ENCODE measurements at regions of chr9 and their contacts with region 1.

Region 1: DNA sequence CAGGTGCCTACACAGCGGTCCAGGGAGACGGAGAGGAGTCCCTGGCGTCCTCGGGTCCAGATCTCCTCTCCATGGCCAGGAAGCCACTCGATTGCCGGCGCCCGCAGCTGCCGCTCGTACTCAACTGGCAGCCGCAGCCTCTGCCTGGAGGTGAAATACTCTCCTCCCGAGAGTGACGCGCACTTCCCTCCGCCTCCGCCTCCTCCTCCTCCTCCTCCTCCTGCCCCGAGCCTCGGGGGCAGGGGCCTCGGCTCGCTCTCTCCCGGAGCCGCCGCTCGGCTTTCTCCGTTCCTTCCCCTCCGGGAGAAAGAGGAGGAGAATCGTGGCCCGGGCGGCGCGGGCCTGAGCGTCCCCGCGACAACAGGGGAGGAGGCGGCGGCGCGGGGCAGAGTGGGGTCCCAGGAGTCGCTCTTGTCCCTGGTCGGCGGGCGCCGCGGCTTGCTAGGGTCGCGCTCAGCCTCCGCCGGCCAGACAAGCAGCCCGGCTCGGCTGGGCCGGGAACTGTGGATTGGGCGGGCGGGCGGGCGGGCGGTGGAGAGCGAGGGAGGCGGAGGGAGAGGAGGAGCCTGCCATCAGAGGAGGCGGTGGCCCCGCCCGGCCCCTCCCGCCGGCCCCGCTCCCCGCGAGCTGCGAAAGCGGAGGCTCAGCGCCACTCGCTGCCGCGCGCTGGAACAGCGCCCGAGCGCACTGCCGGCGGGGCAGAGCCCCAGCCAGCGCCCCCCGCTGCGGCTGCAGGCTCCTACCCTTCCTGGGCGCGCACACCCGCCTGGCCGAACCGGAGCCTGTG is at the start of gene CEMIP2:
- DNase-seq: peak; percentile 91 to 97 (median 96)
- ATAC-seq: peak; percentile 91 to 94
- H3K4me3 ChIP-seq: peak within 1 kb of the TSS; percentile 80
- H3K27ac ChIP-seq: peak within 1 kb of the TSS; percentile 94
- H3K4me1 ChIP-seq: peaks cover 4% of the 10 kb centered on the region
- H3K27me3 ChIP-seq: no peaks in the 10 kb centered on the region
- total RNA-seq, gene CEMIP2: 26.4 to 66.9 (median 42.4) TPM

Region 2: GRCh38 chr9:71582347-71582746 is 186.2 kb before region 1 on chr9:
- intact Hi-C with region 1: no loop called
- DNase-seq: no peak
- ATAC-seq: no peak
- H3K4me3 ChIP-seq: no peak overlapping the region
- H3K27ac ChIP-seq: no peak overlapping the region
- H3K4me1 ChIP-seq: no peaks in the 10 kb centered on the region
- H3K27me3 ChIP-seq: no peaks in the 10 kb centered on the region

Region 3: GRCh38 chr9:71675129-71675856 is 93.3 kb before region 1 on chr9:
- intact Hi-C with region 1: no loop called
- DNase-seq: no peak
- ATAC-seq: no peak
- H3K4me3 ChIP-seq: no peak overlapping the region
- H3K27ac ChIP-seq: no peak overlapping the region
- H3K4me1 ChIP-seq: peaks cover 3% of the 10 kb centered on the region
- H3K27me3 ChIP-seq: no peaks in the 10 kb centered on the region

Region 4: GRCh38 chr9:71716138-71716909 is 52.3 kb before region 1 on chr9:
- intact Hi-C with region 1: loop called in 1 of 4 experiments (anchors 10 kb)
- DNase-seq: no peak
- ATAC-seq: no peak
- H3K4me3 ChIP-seq: no peak overlapping the region
- H3K27ac ChIP-seq: no peak overlapping the region
- H3K4me1 ChIP-seq: no peaks in the 10 kb centered on the region
- H3K27me3 ChIP-seq: no peaks in the 10 kb centered on the region